Activated naive CD4-positive, alpha-beta T cell treated with anti-CD3 and anti-CD28 coated beads, Interleukin-2, amount 10 ng/mL, durations not matched to agents 7 days and 5 days (primary cell): ENCODE measurements at regions of chr19 and their contacts with region 1.

Region 1: DNA sequence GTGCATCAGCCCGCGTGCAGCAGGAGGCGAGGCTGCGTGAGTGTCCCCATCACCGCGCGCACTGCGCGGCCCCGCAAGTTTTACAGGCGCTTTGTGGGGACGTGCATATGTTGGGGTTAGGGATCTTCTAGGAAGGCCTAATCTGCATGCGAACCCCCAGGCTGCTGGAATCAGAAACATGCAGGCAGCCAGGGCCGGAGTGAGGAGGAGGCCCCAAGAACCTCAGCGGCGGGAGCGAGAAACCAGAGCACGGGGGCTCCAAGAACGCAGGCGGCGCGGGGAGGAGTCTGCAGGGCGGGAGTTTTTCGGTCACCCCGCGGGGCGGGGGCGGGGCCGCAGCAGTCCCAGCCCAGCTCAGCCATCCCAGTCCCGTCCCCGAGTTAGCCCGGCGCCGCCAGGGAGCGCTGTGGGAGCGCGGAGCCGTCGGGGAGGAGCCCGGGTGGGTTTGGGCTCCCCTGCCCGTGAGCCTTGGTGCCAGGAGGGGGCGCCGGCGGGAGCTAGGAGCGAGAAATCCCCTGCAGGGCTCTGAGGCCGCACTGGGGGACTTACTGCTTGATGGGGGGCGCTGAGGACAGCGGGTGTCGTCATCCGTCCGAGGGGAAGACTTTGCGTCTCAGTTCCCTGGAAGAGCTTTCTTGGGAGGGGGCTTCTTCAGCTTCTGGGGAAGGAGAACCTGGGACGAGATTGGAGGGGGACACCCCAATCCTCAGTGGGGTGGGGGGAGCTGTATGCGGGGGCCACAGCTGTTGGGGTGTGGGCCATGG is 933 bp upstream of the NRTN start:
- DNase-seq: peak; percentile 95
- H3K4me3 Mint-ChIP-seq: peak overlapping the region; percentile 65
- H3K27ac Mint-ChIP-seq: no peak overlapping the region
- H3K4me1 Mint-ChIP-seq: peaks cover 27% of the 10 kb centered on the region
- H3K27me3 Mint-ChIP-seq: peaks cover 88% of the 10 kb centered on the region

Region 2: DNA sequence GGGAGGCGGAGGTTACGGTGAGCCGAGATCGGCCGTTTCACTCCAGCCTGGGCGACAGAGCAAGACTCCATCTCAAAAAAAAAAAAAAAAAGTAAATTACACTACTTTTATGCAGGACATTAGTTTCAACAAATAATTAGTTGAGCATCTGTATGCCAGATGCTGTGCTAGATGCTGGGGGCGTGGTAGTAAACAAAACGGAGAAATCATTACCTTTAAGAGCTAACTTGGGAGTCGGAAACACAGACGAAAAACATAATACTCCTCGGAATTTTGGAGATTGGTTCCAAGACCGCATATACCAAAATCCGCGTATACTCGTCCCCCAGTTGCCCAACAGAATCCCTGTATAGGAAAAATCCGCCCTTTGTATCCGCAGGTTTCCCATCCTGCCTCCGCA is 11.7 kb before region 1 on chr19:
- CTCF ChIA-PET with region 1: interaction called, 31 read pairs
- DNase-seq: no peak
- H3K4me3 Mint-ChIP-seq: no peak overlapping the region
- H3K27ac Mint-ChIP-seq: no peak overlapping the region
- H3K4me1 Mint-ChIP-seq: peaks cover 16% of the 10 kb centered on the region
- H3K27me3 Mint-ChIP-seq: peaks cover 11% of the 10 kb centered on the region

Region 3: DNA sequence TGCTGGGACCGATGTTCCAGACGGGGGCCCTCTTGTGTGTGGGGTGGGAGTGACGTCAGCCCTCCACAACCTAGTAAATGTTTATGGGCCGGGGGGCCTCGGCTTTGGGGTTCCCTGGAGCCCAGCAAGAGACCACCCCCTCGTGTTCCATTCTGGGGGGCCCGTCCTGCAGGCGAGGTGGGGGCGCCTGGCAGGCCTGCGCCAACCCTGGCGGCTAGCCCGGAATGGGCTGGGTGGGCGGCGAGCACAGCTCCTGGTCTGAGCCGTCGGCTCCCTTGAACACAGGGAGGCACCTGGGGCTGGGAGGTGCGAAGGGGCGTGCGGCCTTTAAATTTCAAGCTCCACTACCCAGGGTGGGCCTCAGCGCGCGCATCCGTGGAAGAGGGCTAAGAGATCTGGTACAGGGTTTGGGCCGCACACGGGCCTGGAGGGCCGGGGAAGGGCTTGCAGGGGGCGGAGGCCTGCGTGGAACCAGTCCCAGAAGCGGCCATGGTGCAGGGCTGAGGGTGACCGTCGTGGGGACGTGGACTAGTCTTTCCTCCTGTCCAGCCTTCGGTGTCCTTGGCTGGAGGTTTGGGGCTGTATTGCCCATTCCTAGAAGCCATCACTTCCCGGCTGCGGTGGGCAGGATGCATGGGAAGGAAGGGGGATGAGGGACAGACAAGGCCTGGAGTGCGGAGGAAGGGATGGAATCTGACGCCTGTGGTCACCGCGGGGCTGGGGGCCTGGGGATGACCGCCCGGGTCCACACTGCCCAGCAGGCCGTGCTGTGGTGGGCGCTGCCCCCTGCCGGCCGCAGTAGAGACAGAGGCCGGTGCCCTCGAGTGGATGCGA is 88.2 kb after region 1 on chr19:
- CTCF ChIA-PET with region 1: interaction called, 25 read pairs
- DNase-seq: no peak
- H3K4me3 Mint-ChIP-seq: no peak overlapping the region
- H3K27ac Mint-ChIP-seq: no peak overlapping the region
- H3K4me1 Mint-ChIP-seq: no peaks in the 10 kb centered on the region
- H3K27me3 Mint-ChIP-seq: peaks cover 25% of the 10 kb centered on the region

Region 4: DNA sequence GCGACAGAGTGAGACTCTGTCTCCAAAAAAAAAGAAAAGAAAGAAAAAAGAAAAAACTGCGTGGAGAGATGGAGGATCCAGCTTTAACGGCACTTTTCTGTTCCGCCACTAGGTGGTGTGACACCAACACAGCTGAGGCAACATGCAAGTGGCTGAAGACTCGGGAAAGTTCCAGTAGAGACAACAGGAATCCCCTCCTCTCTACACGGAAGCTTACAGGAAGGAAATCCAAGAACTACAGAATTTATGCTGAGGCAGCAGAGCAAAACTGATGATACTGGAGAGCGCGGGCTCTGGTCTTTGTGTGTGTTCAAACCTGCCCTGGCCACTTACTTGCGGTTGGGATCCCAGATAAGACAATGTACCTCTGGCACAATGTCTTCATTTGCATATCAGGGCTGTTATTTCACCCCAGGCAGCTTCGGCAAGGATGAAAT is 164.1 kb after region 1 on chr19:
- CTCF ChIA-PET with region 1: interaction called, 10 read pairs
- DNase-seq: peak; percentile 78
- H3K4me3 Mint-ChIP-seq: no peak overlapping the region
- H3K27ac Mint-ChIP-seq: peak overlapping the region; percentile 53
- H3K4me1 Mint-ChIP-seq: peaks cover 78% of the 10 kb centered on the region
- H3K27me3 Mint-ChIP-seq: no peaks in the 10 kb centered on the region

Region 5: DNA sequence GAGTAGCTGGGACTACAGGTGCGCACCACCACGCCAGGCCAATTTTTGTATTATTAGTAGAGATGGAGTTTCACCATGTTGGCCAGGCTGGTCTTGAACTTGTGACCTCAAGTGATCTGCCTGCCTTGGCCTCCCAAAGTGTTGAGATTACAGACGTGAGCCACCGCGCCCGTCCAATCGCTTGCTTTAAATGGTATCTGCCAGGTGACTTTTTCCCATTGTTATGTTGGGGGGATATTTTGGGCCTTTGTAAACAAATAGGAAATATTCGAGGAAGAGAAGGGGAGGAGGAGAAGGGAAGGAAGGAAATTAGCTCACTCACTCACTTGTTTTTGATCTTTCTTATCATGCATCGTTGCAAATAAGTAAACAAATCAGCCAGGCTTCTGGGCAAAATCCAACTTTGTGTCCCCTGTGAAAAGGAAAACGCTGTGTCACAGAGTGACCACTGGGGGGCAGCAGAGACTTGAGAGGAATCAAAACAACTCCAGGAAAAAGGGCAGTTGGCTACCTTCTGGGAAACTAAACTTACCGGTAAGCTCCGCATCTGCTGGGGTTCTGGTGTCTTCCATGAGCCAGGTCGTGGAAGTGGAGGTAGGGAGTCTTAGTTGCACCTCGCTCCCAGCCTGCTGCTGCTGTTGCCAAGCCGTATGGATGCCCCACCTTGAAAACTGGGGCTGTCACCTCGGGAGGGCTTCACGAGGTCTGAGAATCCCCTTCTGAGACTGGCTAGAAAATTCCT is 183.3 kb after region 1 on chr19:
- CTCF ChIA-PET with region 1: interaction called, 11 read pairs
- DNase-seq: peak; percentile 85
- H3K4me3 Mint-ChIP-seq: peak overlapping the region; percentile 55
- H3K27ac Mint-ChIP-seq: peak overlapping the region; percentile 9
- H3K4me1 Mint-ChIP-seq: peaks cover 41% of the 10 kb centered on the region
- H3K27me3 Mint-ChIP-seq: peaks cover 7% of the 10 kb centered on the region